WTC11 (cell line): ENCODE measurements at regions of chr6 and their contacts with region 1.

Region 1: GRCh38 chr6:5379647-5380242 is 118.4 kb downstream of the FARS2 start:
- DNase-seq: peak; percentile 61
- ATAC-seq: peak; percentile 84
- H3K4me3 Mint-ChIP-seq: no peak overlapping the region
- H3K27ac Mint-ChIP-seq: no peak overlapping the region
- H3K4me1 Mint-ChIP-seq: peaks cover 8% of the 10 kb centered on the region
- H3K27me3 Mint-ChIP-seq: no peaks in the 10 kb centered on the region
- CTCF ChIP-seq: peak; percentile 58; the same call in 1 of the 2 replicates

Region 2: GRCh38 chr6:5214570-5215052 is 165.1 kb before region 1 on chr6:
- CTCF ChIA-PET with region 1: interaction called, 25 read pairs
- POLR2A ChIA-PET with region 1: no interaction called
- DNase-seq: peak; percentile 82
- ATAC-seq: peak; percentile 98
- H3K4me3 Mint-ChIP-seq: no peak overlapping the region
- H3K27ac Mint-ChIP-seq: no peak overlapping the region
- H3K4me1 Mint-ChIP-seq: peaks cover 20% of the 10 kb centered on the region
- H3K27me3 Mint-ChIP-seq: no peaks in the 10 kb centered on the region
- CTCF ChIP-seq: peak; percentile 94